ENCODE measurements at regions of chr12 and their contacts with region 1.

Region 1: DNA sequence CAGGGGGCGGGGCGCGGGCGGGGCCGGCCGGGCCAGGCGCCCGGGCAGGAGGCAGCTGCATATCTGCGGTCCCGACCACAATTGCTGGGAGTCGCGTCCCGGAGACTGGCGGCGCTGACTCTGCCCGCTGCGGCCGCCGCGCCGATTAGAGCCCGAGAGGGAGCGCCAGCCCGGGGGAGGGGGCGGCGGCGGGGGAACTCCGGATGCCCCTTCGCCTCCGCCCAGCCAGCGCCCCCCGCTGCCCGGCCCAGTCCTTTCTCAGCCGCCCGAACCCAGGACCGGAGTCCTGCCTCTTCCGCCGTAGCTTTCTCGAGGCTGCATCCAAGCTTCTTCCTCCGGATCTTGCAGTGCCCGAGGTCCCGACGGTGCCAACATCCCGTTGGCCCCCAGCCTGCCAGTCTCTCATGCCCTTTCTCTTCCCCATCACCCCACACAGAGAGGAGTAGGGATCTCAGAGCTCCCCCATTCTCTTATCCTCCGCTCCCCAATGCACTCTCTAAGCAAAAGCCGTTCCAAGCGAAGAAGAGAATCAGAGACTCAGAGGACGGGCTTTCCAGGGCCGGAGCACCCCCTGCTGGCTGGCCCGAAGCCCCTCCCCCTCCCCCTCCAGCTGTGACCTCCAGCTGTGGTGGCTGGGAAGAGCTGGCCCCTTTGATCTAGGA is 8.8 kb upstream of the SP7 start:
- DNase-seq: peak; percentile 73 to 84
- H3K4me3 ChIP-seq: peak overlapping the region; percentile 69
- H3K4me3 Mint-ChIP-seq: peak overlapping the region; percentile 97
- H3K27ac Mint-ChIP-seq: peak overlapping the region; percentile 77
- H3K4me1 ChIP-seq: no peaks in the 10 kb centered on the region
- H3K4me1 Mint-ChIP-seq: peaks cover 6% of the 10 kb centered on the region
- H3K27me3 ChIP-seq: no peaks in the 10 kb centered on the region
- H3K27me3 Mint-ChIP-seq: no peaks in the 10 kb centered on the region
- CTCF ChIP-seq: peak; percentile 64 to 91

Region 2: DNA sequence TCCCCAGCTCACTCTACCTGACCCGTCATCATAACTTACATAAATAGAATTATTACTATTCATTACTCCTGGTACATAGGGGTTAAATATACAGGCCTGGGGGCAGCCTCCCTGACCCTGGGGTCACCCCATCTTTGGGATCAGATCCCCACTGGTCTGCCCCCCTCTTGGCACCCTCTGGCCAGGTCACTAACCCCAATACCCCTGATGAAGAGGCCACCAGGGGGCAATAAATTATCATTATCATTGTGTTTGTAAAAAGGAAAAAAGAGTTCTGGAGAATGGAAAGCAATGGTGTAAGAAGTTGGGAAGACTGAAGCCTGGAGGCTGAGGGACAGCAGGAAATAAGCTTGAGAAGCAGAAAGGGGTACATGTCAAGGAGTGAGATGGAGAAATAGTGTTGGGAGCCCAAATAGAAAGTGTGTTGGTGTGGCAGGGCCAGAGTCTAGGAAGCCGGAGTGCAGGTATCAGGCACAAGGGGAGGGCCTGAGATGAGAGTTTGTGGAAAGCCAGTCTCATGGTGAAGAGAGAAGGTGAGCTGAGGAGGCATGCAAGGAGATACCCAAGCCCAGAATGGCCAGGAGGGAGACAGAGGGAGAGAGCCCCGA is 17.4 kb before region 1 on chr12:
- CTCF ChIA-PET with region 1: interaction called, 63 read pairs
- POLR2A ChIA-PET with region 1: no interaction called
- intact Hi-C with region 1: loop called (anchors 1 kb)
- DNase-seq: peak in 1 of 2 experiments; percentile 25
- H3K4me3 ChIP-seq: no peak overlapping the region
- H3K4me3 Mint-ChIP-seq: no peak overlapping the region
- H3K27ac Mint-ChIP-seq: no peak overlapping the region
- H3K4me1 ChIP-seq: peaks cover 12% of the 10 kb centered on the region
- H3K4me1 Mint-ChIP-seq: peaks cover 18% of the 10 kb centered on the region
- H3K27me3 ChIP-seq: no peaks in the 10 kb centered on the region
- H3K27me3 Mint-ChIP-seq: no peaks in the 10 kb centered on the region
- CTCF ChIP-seq: peak in 1 of 2 experiments; percentile 29

Region 3: GRCh38 chr12:53391729-53392128 is 46.8 kb after region 1 on chr12:
- CTCF ChIA-PET with region 1: no interaction called
- POLR2A ChIA-PET with region 1: no interaction called
- intact Hi-C with region 1: no loop called
- DNase-seq: no peak
- H3K4me3 ChIP-seq: no peak overlapping the region
- H3K4me3 Mint-ChIP-seq: no peak overlapping the region
- H3K27ac Mint-ChIP-seq: no peak overlapping the region
- H3K4me1 ChIP-seq: no peaks in the 10 kb centered on the region
- H3K4me1 Mint-ChIP-seq: peaks cover 7% of the 10 kb centered on the region
- H3K27me3 ChIP-seq: no peaks in the 10 kb centered on the region
- H3K27me3 Mint-ChIP-seq: no peaks in the 10 kb centered on the region
- CTCF ChIP-seq: no peak

Region 4: GRCh38 chr12:53500776-53501614 is 156.0 kb after region 1 on chr12 and contains the start of gene TARBP2:
- CTCF ChIA-PET with region 1: no interaction called
- POLR2A ChIA-PET with region 1: no interaction called
- intact Hi-C with region 1: loop called (anchors 1 kb)
- DNase-seq: peak; percentile 97 to 98
- H3K4me3 ChIP-seq: peak within 1 kb of the TSS; percentile 63
- H3K4me3 Mint-ChIP-seq: peak within 1 kb of the TSS; percentile 80
- H3K27ac Mint-ChIP-seq: peak within 1 kb of the TSS; percentile 86
- H3K4me1 ChIP-seq: peaks cover 16% of the 10 kb centered on the region
- H3K4me1 Mint-ChIP-seq: peaks cover 31% of the 10 kb centered on the region
- H3K27me3 ChIP-seq: no peaks in the 10 kb centered on the region
- H3K27me3 Mint-ChIP-seq: no peaks in the 10 kb centered on the region
- CTCF ChIP-seq: no peak
- total RNA-seq, gene TARBP2: 43.9 and 50.7 TPM in 2 replicates

Region 5: GRCh38 chr12:53625946-53626701 is 281.2 kb after region 1 on chr12 and contains the start of gene ATF7:
- CTCF ChIA-PET with region 1: no interaction called
- POLR2A ChIA-PET with region 1: no interaction called
- intact Hi-C with region 1: no loop called
- DNase-seq: peak; percentile 98 to 99
- H3K4me3 ChIP-seq: peak within 1 kb of the TSS; percentile 73
- H3K4me3 Mint-ChIP-seq: peak within 1 kb of the TSS; percentile 100
- H3K27ac Mint-ChIP-seq: peak within 1 kb of the TSS; percentile 91
- H3K4me1 ChIP-seq: peaks cover 12% of the 10 kb centered on the region
- H3K4me1 Mint-ChIP-seq: peaks cover 27% of the 10 kb centered on the region
- H3K27me3 ChIP-seq: no peaks in the 10 kb centered on the region
- H3K27me3 Mint-ChIP-seq: no peaks in the 10 kb centered on the region
- CTCF ChIP-seq: no peak
- total RNA-seq, gene ATF7: 26.9 and 28.7 TPM in 2 replicates

Measured in Caco-2 (cell line).